Kidney (tissue), 22 donors: ENCODE measurements at regions of chr20 and their contacts with region 1.

Region 1: DNA sequence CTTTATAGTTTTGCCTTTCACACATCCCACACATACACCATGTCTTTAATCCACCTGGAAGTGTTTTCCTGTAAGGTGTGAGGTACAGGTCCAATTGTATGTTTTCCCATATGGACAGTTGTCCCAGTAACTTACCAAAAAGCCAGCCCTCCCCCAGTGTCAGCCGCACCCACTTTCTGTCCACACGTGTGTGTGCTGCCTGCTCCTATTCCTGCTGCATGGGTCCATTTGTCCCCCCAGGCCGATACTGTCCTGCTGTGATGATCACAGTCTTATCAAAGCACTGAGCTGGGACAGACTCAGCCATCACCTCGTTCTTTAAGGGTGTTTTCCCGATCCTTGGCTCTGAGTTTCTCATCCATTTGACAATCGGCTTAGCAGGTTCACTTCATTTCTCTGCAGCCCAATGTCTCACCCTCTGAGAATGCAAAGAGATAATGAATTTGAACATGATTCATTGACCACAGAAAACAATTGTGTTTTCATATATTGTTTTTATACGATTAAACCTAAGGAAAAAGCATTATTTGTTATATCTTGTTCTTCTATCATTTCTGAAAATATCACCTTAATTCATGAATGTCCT is 9.6 kb downstream of the VSX1 start:
- DNase-seq: no peak
- H3K4me3 ChIP-seq: no peak overlapping the region
- H3K27ac ChIP-seq: no peak overlapping the region
- H3K4me1 ChIP-seq: no peaks in the 10 kb centered on the region
- H3K27me3 ChIP-seq: peaks cover 8% of the 10 kb centered on the region
- CTCF ChIP-seq: no peak

Region 2: GRCh38 chr20:24477601-24478547 is 594.4 kb before region 1 on chr20:
- intact Hi-C with region 1: no loop called
- DNase-seq: no peak
- H3K4me3 ChIP-seq: no peak overlapping the region
- H3K27ac ChIP-seq: no peak overlapping the region
- H3K4me1 ChIP-seq: no peaks in the 10 kb centered on the region
- H3K27me3 ChIP-seq: no peaks in the 10 kb centered on the region
- CTCF ChIP-seq: no peak

Region 3: DNA sequence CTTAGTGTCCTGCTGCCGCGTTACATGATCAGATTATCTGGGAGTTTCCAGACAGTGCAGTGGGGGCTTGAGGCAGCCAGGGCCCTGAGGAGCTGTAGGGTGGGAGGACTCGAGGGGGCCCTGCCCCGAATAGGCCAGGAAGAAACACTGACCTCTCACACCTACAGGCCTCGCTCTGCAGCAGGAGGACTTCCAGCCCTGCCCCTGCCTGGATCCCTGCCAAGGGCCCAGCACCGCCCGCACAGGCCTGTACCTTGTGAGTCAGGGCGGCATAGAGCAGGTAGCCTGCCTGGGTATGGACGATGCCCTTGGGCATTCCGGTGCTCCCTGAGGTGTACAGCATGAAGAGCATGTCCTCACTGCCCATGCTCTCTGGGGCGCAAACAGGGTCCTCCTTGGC is 49.6 kb before region 1 on chr20:
- intact Hi-C with region 1: no loop called
- DNase-seq: peak in 3 of 5 donors; percentile 34 to 94 (median 37)
- H3K4me3 ChIP-seq: no peak overlapping the region
- H3K27ac ChIP-seq: peak overlapping the region; percentile 49 to 62
- H3K4me1 ChIP-seq: peaks cover 0 to 39% (median 17%) of the 10 kb centered on the region in 3 donors
- H3K27me3 ChIP-seq: no peaks in the 10 kb centered on the region
- CTCF ChIP-seq: no peak

Region 4: GRCh38 chr20:25188218-25188617 is 115.9 kb after region 1 on chr20:
- intact Hi-C with region 1: loop called (anchors 5 kb)
- DNase-seq: no peak
- H3K4me3 ChIP-seq: no peak overlapping the region
- H3K27ac ChIP-seq: no peak overlapping the region
- H3K4me1 ChIP-seq: no peaks in the 10 kb centered on the region
- H3K27me3 ChIP-seq: no peaks in the 10 kb centered on the region
- CTCF ChIP-seq: no peak

Region 5: GRCh38 chr20:25310268-25310920 is 238.1 kb after region 1 on chr20:
- intact Hi-C with region 1: no loop called
- DNase-seq: peak in 4 of 5 donors; percentile 21 to 84 (median 46)
- H3K4me3 ChIP-seq: peak overlapping the region in 2 of 3 donors; percentile 30 to 46
- H3K27ac ChIP-seq: peak overlapping the region; percentile 45 to 81
- H3K4me1 ChIP-seq: peaks cover 0 to 17% (median 9%) of the 10 kb centered on the region in 3 donors
- H3K27me3 ChIP-seq: no peaks in the 10 kb centered on the region
- CTCF ChIP-seq: peak; percentile 53